Heart left ventricle (tissue), 16 donors: ENCODE measurements at regions of chr11 and their contacts with region 1.

Region 1: GRCh38 chr11:58513747-58514367 is 6.0 kb upstream of the OR5B21 start:
- DNase-seq: no peak
- ATAC-seq: peak in 3 of 4 donors; percentile 65 to 74 (median 73)
- H3K4me3 ChIP-seq: no peak overlapping the region
- H3K27ac ChIP-seq: no peak overlapping the region
- H3K4me1 ChIP-seq: peaks cover 0 to 3% (median 0%) of the 10 kb centered on the region in 12 donors
- H3K27me3 ChIP-seq: peaks cover 0 to 5% (median 0%) of the 10 kb centered on the region in 9 donors
- CTCF ChIP-seq: peak; percentile 42 to 76 (median 68)
- POLR2A ChIP-seq: no peak

Region 2: DNA sequence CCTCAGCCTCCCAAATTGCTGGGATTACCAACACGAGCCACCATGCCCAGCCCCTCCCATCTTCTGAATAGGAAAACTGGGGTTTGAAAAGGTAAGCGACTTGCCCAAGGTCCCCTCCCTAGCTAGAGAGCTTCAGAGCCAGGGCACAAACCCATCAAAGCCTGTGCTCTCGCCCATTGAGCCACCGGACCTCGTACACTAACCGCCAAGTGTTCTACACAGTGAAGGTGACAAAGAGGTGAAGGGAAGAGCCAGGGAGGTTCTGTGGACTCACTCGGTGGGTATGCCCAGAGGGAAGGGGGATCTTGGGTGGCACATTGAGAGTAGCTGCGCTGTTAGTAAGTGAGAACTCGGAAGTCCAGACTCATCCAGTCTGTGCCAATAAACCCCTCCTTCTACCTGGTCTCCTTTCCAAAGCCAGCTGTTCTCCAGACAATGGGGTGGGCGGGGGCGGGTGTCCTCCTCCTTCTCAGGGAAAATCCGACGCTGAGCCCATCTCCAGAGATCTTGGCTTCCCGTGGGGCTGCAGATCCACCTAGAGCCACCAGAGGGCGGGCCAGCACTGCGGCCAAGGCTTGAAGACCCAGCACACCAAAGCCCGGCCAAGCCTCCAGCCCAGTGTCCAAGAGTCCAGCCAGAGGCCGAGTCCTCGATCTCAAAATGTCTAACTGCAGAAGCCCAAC is 1056.8 kb before region 1 on chr11:
- intact Hi-C with region 1: loop called in 3 of 10 experiments (anchors 5 to 10 kb)
- DNase-seq: peak; percentile 87 to 95 (median 89)
- ATAC-seq: peak; percentile 57 to 89 (median 86)
- H3K4me3 ChIP-seq: peak overlapping the region in 2 of 12 donors; percentile 4 to 19
- H3K27ac ChIP-seq: no peak overlapping the region
- H3K4me1 ChIP-seq: peaks cover 3 to 43% (median 25%) of the 10 kb centered on the region in 12 donors
- H3K27me3 ChIP-seq: peaks cover 9 to 47% (median 32%) of the 10 kb centered on the region in 9 donors
- CTCF ChIP-seq: peak; percentile 98 to 100 (median 98)
- POLR2A ChIP-seq: no peak

Region 3: GRCh38 chr11:57644748-57645688 is 868.8 kb before region 1 on chr11:
- intact Hi-C with region 1: loop called in 2 of 10 experiments (anchors 10 kb)
- DNase-seq: peak; percentile 74 to 83 (median 82)
- ATAC-seq: peak in 3 of 4 donors; percentile 74 to 80 (median 80)
- H3K4me3 ChIP-seq: peak overlapping the region in 3 of 12 donors; percentile 2 to 21 (median 19)
- H3K27ac ChIP-seq: peak overlapping the region in 10 of 12 donors; percentile 10 to 69 (median 56)
- H3K4me1 ChIP-seq: peaks cover 2 to 75% (median 46%) of the 10 kb centered on the region in 12 donors
- H3K27me3 ChIP-seq: peaks cover 4 to 43% (median 34%) of the 10 kb centered on the region in 9 donors
- CTCF ChIP-seq: peak; percentile 77 to 91 (median 86)
- POLR2A ChIP-seq: no peak

Region 4: GRCh38 chr11:57815476-57815875 is 698.4 kb before region 1 on chr11:
- intact Hi-C with region 1: loop called in 3 of 10 experiments (anchors 10 kb)
- DNase-seq: no peak
- ATAC-seq: no peak
- H3K4me3 ChIP-seq: no peak overlapping the region
- H3K27ac ChIP-seq: no peak overlapping the region
- H3K4me1 ChIP-seq: peaks cover 0 to 12% (median 0%) of the 10 kb centered on the region in 12 donors
- H3K27me3 ChIP-seq: no peaks in the 10 kb centered on the region
- CTCF ChIP-seq: no peak
- POLR2A ChIP-seq: no peak

Region 5: DNA sequence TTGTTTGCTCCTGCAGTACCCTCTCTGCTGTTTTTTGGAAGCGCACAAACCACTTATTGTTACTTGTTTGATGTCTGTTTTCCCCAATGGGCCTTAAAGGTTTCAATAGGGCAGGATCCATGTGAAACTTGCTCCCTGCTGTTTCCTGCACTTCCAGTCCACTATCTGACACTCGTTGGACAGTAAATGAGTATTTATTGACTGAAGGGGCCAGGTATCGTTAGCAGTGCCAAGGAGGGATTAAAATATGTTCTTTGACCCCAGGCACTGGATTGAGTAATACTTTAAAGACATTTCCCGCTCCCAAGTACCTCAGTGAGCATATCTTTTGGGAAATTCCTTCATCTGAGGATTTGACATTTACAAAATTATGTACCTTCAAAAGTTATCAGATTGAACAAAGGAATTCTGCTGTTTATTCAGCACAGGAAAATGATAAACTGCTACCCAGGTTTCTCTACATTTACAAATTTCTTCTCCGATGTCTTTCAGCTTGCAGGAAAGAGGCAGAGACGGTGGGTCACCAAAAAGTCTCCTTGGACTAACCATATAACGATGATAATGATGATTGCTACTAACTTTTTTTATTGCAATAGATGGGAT is 348.3 kb before region 1 on chr11:
- intact Hi-C with region 1: loop called in 1 of 10 experiments (anchors 5 kb)
- DNase-seq: no peak
- ATAC-seq: no peak
- H3K4me3 ChIP-seq: no peak overlapping the region
- H3K27ac ChIP-seq: no peak overlapping the region
- H3K4me1 ChIP-seq: no peaks in the 10 kb centered on the region
- H3K27me3 ChIP-seq: no peaks in the 10 kb centered on the region
- CTCF ChIP-seq: no peak
- POLR2A ChIP-seq: no peak

Region 6: GRCh38 chr11:58345204-58345603 is 168.7 kb before region 1 on chr11:
- intact Hi-C with region 1: no loop called
- DNase-seq: no peak
- ATAC-seq: no peak
- H3K4me3 ChIP-seq: no peak overlapping the region
- H3K27ac ChIP-seq: no peak overlapping the region
- H3K4me1 ChIP-seq: no peaks in the 10 kb centered on the region
- H3K27me3 ChIP-seq: no peaks in the 10 kb centered on the region
- CTCF ChIP-seq: no peak
- POLR2A ChIP-seq: no peak

Region 7: GRCh38 chr11:59753650-59754493 is 1240.0 kb after region 1 on chr11:
- intact Hi-C with region 1: no loop called
- DNase-seq: peak; percentile 86 to 93 (median 89)
- ATAC-seq: peak; percentile 75 to 87 (median 81)
- H3K4me3 ChIP-seq: peak overlapping the region; percentile 74 to 99 (median 93)
- H3K27ac ChIP-seq: peak overlapping the region in 11 of 12 donors; percentile 94 to 98 (median 96)
- H3K4me1 ChIP-seq: peaks cover 0 to 21% (median 7%) of the 10 kb centered on the region in 12 donors
- H3K27me3 ChIP-seq: no peaks in the 10 kb centered on the region
- CTCF ChIP-seq: peak; percentile 88 to 98 (median 95)
- POLR2A ChIP-seq: peak in 1 of 2 donors; percentile 21